Activated T-helper 2 cell treated with anti-CD3 and anti-CD28 coated beads, Interferon-gamma antibody, Interleukin-2, Interleukin-4, amounts not matched to agents 10 μg/mL and 5 μg/mL and 100 μg/mL, durations not matched to agents 14 hours and 24 hours and 36 hours (primary cell): ENCODE measurements at regions of chr10 and their contacts with region 1.

Region 1: DNA sequence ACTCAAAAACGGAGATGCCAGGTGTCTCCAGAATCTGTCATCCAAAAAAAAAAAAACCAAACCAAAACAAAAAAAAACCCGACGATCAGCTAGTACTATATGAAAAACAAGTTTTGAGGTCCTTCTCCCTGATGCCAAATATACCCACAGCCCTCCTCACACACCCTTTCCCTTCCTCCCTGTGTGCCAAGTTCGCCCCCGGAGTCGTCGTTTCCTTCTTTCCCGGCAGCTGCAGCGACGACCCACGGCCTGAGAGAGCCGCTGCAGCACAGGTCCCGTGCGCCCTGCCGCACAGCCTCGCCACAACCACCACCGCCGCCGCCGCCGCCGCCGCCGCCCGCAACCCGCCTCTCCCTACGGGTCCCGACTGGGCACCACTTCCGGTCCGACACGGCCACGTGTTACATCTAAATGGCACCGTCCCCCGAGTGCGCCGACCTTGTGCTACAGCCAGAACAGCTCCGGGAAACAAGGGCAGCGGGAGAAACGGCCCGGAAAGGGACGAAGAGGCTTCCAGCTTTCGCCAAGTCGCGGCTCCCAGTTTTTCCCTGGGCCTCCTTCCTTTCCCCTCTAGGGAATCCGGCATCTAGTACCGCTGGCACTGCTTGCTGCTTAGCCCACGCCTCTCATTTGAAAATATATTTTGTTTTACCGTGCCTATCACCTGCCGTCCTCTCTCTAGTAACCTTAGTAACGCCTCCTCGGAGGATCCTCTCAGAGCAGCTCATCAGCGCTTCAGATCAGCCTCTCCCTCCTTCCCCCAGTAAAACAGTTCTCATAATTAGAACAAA is at the start of gene FRA10AC1:
- DNase-seq: peak; percentile 87
- H3K4me3 Mint-ChIP-seq: no peak within 1 kb of the TSS
- H3K27ac Mint-ChIP-seq: no peak within 1 kb of the TSS
- H3K4me1 Mint-ChIP-seq: peaks cover 16% of the 10 kb centered on the region
- H3K27me3 Mint-ChIP-seq: no peaks in the 10 kb centered on the region
- total RNA-seq, gene FRA10AC1: 18.6 and 20.7 TPM in 2 replicates

Region 2: DNA sequence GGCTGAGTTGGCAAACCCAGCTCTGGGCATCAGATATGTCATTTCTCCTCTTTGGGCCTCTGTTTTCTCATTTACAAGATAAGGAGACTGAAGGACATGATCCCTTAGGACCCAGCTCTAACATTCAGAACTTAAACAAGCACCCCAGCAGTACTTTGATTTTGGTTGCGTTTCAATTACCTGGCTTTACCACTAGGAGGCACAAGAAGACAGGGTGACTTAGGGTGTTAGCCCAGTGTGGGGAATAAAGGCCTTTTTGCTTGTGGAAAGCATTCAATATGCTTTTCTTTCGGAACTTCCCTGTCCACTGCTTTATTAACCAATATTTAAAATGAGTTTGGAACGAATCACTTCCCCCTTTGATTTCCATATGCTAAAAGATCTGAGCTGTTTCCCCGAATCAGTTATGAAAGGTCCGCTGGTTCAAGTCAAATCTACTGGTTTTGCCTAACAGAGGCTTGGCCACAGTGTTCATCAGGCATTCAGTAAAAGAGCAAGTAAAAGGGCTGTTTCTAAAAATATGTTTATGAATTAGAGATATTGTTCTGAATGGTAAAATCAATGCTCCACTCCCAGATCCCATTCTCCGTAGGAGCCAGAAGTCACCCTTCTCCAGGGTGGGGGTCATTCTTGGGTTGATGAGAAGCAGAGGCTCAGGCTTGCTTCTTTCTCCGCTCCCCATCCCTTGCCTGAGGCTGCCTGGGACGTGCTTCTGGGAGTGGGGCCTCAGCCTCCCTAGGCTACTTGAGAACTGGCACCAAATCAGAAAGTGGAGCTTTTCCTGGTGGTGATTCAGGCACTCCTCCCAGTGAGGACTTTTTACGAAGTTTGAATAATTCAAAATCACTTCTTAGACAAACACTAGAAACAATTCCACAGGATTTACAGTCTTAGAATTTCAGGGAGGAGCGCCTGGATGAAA is 325.8 kb before region 1 on chr10:
- intact Hi-C with region 1: loop called (anchors 10 kb)
- DNase-seq: peak; percentile 32
- H3K4me3 Mint-ChIP-seq: no peak overlapping the region
- H3K27ac Mint-ChIP-seq: peak overlapping the region; percentile 44
- H3K4me1 Mint-ChIP-seq: peaks cover 32% of the 10 kb centered on the region
- H3K27me3 Mint-ChIP-seq: no peaks in the 10 kb centered on the region

Region 3: GRCh38 chr10:93816123-93816747 is 113.8 kb after region 1 on chr10:
- intact Hi-C with region 1: loop called (anchors 5 kb)
- DNase-seq: peak; percentile 10
- H3K4me3 Mint-ChIP-seq: no peak overlapping the region
- H3K27ac Mint-ChIP-seq: no peak overlapping the region
- H3K4me1 Mint-ChIP-seq: peaks cover 3% of the 10 kb centered on the region
- H3K27me3 Mint-ChIP-seq: peaks cover 34% of the 10 kb centered on the region

Region 4: GRCh38 chr10:94362360-94363250 is 660.2 kb after region 1 on chr10 and contains the start of gene NOC3L:
- intact Hi-C with region 1: loop called (anchors 1 kb)
- DNase-seq: peak; percentile 90
- H3K4me3 Mint-ChIP-seq: peak within 1 kb of the TSS; percentile 95
- H3K27ac Mint-ChIP-seq: peak within 1 kb of the TSS; percentile 90
- H3K4me1 Mint-ChIP-seq: peaks cover 21% of the 10 kb centered on the region
- H3K27me3 Mint-ChIP-seq: peaks cover 13% of the 10 kb centered on the region
- total RNA-seq, gene NOC3L: 41.2 and 43.6 TPM in 2 replicates

Region 5: DNA sequence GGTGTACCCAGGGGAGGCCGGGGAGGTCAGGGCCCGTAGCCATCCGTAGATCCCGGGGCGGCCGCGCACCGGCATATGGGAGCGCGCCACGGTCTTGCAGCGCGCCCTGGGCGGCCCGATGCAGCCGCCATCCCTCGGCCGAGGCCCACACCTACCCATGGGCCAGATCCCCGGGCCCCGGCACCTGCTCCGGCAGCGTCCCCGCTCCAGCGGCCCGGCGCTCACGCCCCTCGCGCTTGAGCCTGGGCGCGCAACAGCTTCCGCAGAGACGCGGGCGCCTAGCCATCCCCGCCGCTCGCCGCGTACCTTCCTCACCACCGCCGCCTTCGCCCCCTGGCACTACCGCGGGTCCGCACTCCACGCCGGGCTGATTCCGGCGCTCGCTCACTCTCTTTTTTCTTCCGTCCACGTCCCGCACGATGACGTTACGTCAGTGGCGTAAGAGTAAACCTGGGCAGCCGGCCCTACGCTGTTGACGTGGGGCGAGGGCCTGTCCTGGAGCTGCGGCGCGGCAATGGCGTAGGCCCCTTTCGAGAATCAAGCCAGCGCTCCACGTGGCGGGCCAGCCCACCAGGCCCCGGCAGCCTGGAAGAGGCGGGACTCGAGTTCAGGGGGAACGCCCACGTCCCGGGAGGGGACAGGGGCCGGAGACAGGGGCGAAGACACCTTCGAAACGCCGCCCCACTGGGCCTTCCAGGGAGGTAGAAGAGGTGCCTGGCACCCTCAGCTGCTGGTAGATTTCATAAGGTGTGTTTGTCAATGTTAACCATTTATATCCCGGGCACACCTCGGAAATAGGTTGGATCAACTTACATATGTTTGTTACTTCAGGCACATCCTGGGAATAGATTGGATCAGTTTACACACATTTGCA is 1954.1 kb after region 1 on chr10 and contains the start of gene ALDH18A1:
- intact Hi-C with region 1: loop called (anchors 10 kb)
- DNase-seq: peak; percentile 87
- H3K4me3 Mint-ChIP-seq: peak within 1 kb of the TSS; percentile 97
- H3K27ac Mint-ChIP-seq: peak within 1 kb of the TSS; percentile 97
- H3K4me1 Mint-ChIP-seq: peaks cover 17% of the 10 kb centered on the region
- H3K27me3 Mint-ChIP-seq: no peaks in the 10 kb centered on the region
- total RNA-seq, gene ALDH18A1: 121 and 127 TPM in 2 replicates